ENCODE measurements at regions of chr20 and their contacts with region 1.

Region 1: GRCh38 chr20:44180814-44181213 is 6.2 kb downstream of the JPH2 start:
- DNase-seq: peak; percentile 34
- H3K4me3 ChIP-seq: peak overlapping the region in 1 of 4 donors; percentile 2
- H3K27ac ChIP-seq: peak overlapping the region; percentile 70 to 91 (median 86)
- H3K4me1 ChIP-seq: peaks cover 5 to 20% (median 14%) of the 10 kb centered on the region in 4 donors
- H3K27me3 ChIP-seq: no peaks in the 10 kb centered on the region
- CTCF ChIP-seq: no peak
- EP300 ChIP-seq: peak; percentile 14
- POLR2A ChIP-seq: no peak

Region 2: GRCh38 chr20:44092551-44093248 is 88.1 kb before region 1 on chr20:
- in situ Hi-C with region 1: no loop called
- intact Hi-C with region 1: no loop called
- DNase-seq: no peak
- H3K4me3 ChIP-seq: no peak overlapping the region
- H3K27ac ChIP-seq: no peak overlapping the region
- H3K4me1 ChIP-seq: no peaks in the 10 kb centered on the region
- H3K27me3 ChIP-seq: peaks cover 8% of the 10 kb centered on the region
- CTCF ChIP-seq: peak in 4 of 5 experiments; percentile 28 to 54 (median 42)
- EP300 ChIP-seq: no peak
- POLR2A ChIP-seq: no peak

Region 3: DNA sequence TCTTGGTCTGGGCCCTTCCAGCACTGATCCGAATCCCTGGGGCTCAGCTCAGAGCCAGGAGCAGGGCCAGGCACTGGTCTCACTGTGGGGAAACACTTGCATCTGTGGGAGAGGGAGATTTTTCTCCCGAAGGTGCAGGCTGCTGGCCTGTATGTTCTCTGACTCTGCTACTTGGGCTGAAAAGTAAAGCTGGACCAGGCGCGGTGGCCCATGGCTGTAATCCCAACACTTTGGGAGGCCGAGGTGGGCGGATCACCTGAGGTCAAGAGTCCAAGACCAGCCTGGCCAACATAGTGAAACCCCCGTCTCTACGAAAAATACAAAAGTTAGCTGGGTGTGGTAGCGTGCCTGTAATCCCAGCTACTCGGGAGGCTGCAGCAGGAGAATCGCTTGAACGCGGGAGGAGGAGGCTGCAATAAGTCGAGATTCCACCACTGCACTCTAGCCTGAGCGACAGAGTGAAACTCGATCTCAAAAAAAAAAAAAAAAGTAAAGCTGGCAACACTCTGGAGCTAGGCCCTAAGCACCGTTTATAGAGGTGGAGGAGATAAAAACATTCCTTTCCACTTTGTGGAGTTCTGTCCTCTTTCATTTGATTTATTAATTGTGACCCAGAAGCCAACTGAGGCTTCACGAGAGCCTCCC is 35.6 kb before region 1 on chr20:
- in situ Hi-C with region 1: no loop called
- intact Hi-C with region 1: loop called (anchors 5 kb)
- DNase-seq: no peak
- H3K4me3 ChIP-seq: no peak overlapping the region
- H3K27ac ChIP-seq: peak overlapping the region; percentile 67 to 84 (median 79)
- H3K4me1 ChIP-seq: peaks cover 0 to 8% (median 3%) of the 10 kb centered on the region in 4 donors
- H3K27me3 ChIP-seq: no peaks in the 10 kb centered on the region
- CTCF ChIP-seq: no peak
- EP300 ChIP-seq: no peak
- POLR2A ChIP-seq: no peak